ENCODE measurements at regions of chr2 and their contacts with region 1.

Region 1: GRCh38 chr2:231052494-231053451 is 3.9 kb upstream of the PSMD1 start:
- DNase-seq: peak; percentile 90
- ATAC-seq: peak; percentile 88
- H3K4me3 Mint-ChIP-seq: peak overlapping the region; percentile 76
- H3K27ac Mint-ChIP-seq: no peak overlapping the region
- H3K4me1 Mint-ChIP-seq: peaks cover 11% of the 10 kb centered on the region
- H3K27me3 Mint-ChIP-seq: peaks cover 46% of the 10 kb centered on the region
- CTCF ChIP-seq: peak; percentile 80

Region 2: DNA sequence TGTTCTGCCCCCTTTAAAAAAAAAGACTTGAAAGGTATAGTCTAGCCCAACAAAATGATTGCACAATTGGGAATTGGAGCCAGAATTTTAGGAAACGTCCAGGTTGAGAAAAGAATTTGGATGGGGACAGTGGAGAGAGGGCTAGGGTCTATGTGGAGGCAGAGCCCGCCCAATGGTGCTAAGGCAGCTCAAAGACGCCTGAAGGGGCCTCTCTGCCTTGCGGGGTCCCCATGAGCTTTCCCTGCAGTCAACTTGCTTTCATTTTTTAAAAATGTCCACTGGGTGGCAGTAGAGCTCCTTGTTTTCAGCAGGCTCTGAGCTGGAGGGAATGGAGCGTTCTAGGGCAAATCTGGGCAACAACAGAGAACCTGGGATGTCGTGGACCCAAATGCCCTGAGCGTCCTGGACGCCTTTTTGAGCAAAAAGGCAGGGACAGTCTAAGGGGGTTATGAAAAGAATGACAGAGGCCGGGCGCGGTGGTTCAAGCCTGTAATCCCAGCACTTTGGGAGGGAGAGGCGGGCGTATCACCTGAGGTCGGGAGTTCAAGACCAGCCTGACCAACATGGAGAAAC is 228.3 kb before region 1 on chr2:
- CTCF ChIA-PET with region 1: interaction called, 51 read pairs
- POLR2A ChIA-PET with region 1: no interaction called
- DNase-seq: peak; percentile 59
- ATAC-seq: peak; percentile 89
- H3K4me3 Mint-ChIP-seq: no peak overlapping the region; the same call in 1 of the 2 replicates
- H3K27ac Mint-ChIP-seq: no peak overlapping the region
- H3K4me1 Mint-ChIP-seq: peaks cover 11% of the 10 kb centered on the region
- H3K27me3 Mint-ChIP-seq: peaks cover 5% of the 10 kb centered on the region; the same call in 1 of the 2 replicates
- CTCF ChIP-seq: peak; percentile 70

Region 3: DNA sequence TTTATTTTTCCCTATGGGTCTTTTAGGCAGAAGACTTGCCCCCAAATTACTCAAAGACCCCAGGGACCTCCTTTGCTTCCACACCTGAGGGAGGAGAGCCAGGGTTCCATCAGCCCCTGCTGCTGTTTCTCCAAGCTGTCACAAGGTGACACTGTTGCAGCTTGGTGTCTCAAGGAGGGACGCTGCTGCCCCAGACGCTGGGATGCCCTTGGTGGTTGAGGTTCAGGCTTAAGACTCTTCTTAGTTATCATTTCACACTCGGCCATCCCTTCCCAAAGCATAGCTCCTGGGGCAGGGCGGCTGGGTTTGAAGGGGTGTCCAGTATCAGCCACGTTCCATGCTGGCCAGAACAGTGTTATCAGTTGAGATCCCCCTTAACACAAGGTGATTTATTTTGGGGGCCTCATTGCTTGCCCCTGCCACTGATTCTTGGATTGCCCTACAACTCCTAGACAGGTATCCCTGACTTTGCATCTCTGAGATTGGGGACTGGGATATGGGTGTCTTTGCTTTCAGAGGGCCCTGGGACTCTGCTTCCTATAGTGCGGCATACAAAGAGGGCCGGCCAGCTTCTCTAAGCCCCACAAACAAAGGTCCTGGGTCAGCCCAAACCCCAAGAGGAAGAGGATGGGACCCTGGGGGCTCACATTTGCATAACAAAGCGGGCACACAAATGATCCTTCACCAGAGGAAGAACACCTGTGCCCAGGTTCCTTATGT is 150.4 kb before region 1 on chr2:
- CTCF ChIA-PET with region 1: interaction called, 18 read pairs
- POLR2A ChIA-PET with region 1: no interaction called
- DNase-seq: peak; percentile 78
- ATAC-seq: peak; percentile 83
- H3K4me3 Mint-ChIP-seq: peak overlapping the region; percentile 42
- H3K27ac Mint-ChIP-seq: peak overlapping the region; percentile 71
- H3K4me1 Mint-ChIP-seq: peaks cover 60% of the 10 kb centered on the region
- H3K27me3 Mint-ChIP-seq: peaks cover 26% of the 10 kb centered on the region
- CTCF ChIP-seq: peak; percentile 71

Region 4: DNA sequence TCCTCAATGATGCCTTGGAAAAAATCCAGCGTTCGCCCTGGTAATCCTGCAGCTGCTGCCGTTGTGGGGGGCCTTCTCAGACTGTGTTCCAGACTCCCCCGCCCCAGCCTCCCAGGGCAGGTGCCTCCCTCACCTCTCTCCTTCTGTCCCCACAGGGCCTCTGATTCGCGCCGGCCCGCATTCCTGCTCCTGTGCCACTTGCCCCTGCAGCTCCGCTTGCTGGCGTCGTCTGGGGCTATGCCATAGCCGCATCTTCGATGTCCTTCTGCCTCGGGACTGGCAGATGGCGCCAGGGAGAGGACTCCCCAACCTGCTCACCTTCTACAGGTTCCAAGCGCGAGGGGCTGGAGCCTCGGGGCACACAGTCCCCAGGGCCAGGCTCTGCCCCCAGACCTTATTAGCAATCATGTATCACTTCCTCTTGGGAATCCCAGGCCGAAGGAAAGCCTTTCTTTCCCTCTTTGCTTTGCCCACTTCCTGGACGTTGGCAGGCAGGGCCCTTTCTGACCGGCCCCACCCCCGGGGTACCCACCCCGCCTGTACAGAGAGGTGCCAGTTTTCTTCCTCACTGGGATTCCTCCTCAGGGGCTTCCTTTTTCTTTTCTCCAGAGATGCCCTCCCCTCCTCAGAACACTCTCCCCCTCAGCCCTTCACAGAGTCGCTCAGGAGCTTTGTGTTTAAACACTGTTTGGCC is 52.4 kb before region 1 on chr2:
- CTCF ChIA-PET with region 1: interaction called, 22 read pairs
- POLR2A ChIA-PET with region 1: no interaction called
- DNase-seq: peak; percentile 72
- ATAC-seq: peak; percentile 97
- H3K4me3 Mint-ChIP-seq: no peak overlapping the region
- H3K27ac Mint-ChIP-seq: no peak overlapping the region
- H3K4me1 Mint-ChIP-seq: peaks cover 8% of the 10 kb centered on the region; the same call in 1 of the 2 replicates
- H3K27me3 Mint-ChIP-seq: peaks cover 18% of the 10 kb centered on the region
- CTCF ChIP-seq: no peak

Region 5: GRCh38 chr2:231017231-231017598 is 35.6 kb before region 1 on chr2:
- CTCF ChIA-PET with region 1: interaction called, 23 read pairs
- POLR2A ChIA-PET with region 1: no interaction called
- DNase-seq: no peak
- ATAC-seq: peak; percentile 53
- H3K4me3 Mint-ChIP-seq: no peak overlapping the region
- H3K27ac Mint-ChIP-seq: no peak overlapping the region
- H3K4me1 Mint-ChIP-seq: peaks cover 18% of the 10 kb centered on the region
- H3K27me3 Mint-ChIP-seq: no peaks in the 10 kb centered on the region; the same call in none of the 2 replicates
- CTCF ChIP-seq: no peak